ENCODE measurements at regions of chr7 and their contacts with region 1.

Region 1: GRCh38 chr7:32937344-32938174 is 19.7 kb upstream of the FKBP9 start:
- DNase-seq: no peak
- ATAC-seq: no peak
- H3K4me3 ChIP-seq: no peak overlapping the region
- H3K27ac ChIP-seq: no peak overlapping the region
- H3K4me1 ChIP-seq: no peaks in the 10 kb centered on the region
- H3K27me3 ChIP-seq: no peaks in the 10 kb centered on the region
- CTCF ChIP-seq: no peak

Region 2: GRCh38 chr7:32921896-32922295 is 15.7 kb before region 1 on chr7:
- CTCF ChIA-PET with region 1: no interaction called
- POLR2A ChIA-PET with region 1: no interaction called
- intact Hi-C with region 1: loop called (anchors 2 kb)
- DNase-seq: no peak
- ATAC-seq: no peak
- H3K4me3 ChIP-seq: no peak overlapping the region
- H3K27ac ChIP-seq: no peak overlapping the region
- H3K4me1 ChIP-seq: no peaks in the 10 kb centered on the region
- H3K27me3 ChIP-seq: no peaks in the 10 kb centered on the region
- CTCF ChIP-seq: no peak

Region 3: GRCh38 chr7:33185786-33186185 is 248.2 kb after region 1 on chr7:
- CTCF ChIA-PET with region 1: no interaction called
- POLR2A ChIA-PET with region 1: no interaction called
- intact Hi-C with region 1: no loop called
- DNase-seq: peak; percentile 70
- ATAC-seq: peak; percentile 98
- H3K4me3 ChIP-seq: no peak overlapping the region
- H3K27ac ChIP-seq: no peak overlapping the region
- H3K4me1 ChIP-seq: no peaks in the 10 kb centered on the region
- H3K27me3 ChIP-seq: no peaks in the 10 kb centered on the region
- CTCF ChIP-seq: peak; percentile 85